ENCODE measurements at regions of chrX and their contacts with region 1.

Region 1: GRCh38 chrX:112731793-112732575 is 52.2 kb upstream of the LHFPL1 start:
- DNase-seq: peak in 2 of 9 experiments; percentile 0 to 2
- ATAC-seq: no peak
- H3K4me3 ChIP-seq: no peak overlapping the region
- H3K4me3 Mint-ChIP-seq: no peak overlapping the region
- H3K27ac ChIP-seq: no peak overlapping the region
- H3K27ac Mint-ChIP-seq: no peak overlapping the region
- H3K4me1 ChIP-seq: no peaks in the 10 kb centered on the region
- H3K4me1 Mint-ChIP-seq: peaks cover 5% of the 10 kb centered on the region
- H3K27me3 ChIP-seq: no peaks in the 10 kb centered on the region
- H3K27me3 Mint-ChIP-seq: no peaks in the 10 kb centered on the region
- CTCF ChIP-seq: peak; percentile 42

Region 2: GRCh38 chrX:111719426-111720210 is 1012.4 kb before region 1 on chrX:
- CTCF ChIA-PET with region 1: no interaction called
- POLR2A ChIA-PET with region 1: no interaction called
- intact Hi-C with region 1: loop called in 1 of 2 experiments (anchors 10 kb)
- DNase-seq: peak in 1 of 9 experiments; percentile 1
- ATAC-seq: no peak
- H3K4me3 ChIP-seq: no peak overlapping the region
- H3K4me3 Mint-ChIP-seq: no peak overlapping the region
- H3K27ac ChIP-seq: no peak overlapping the region
- H3K27ac Mint-ChIP-seq: no peak overlapping the region
- H3K4me1 ChIP-seq: no peaks in the 10 kb centered on the region
- H3K4me1 Mint-ChIP-seq: no peaks in the 10 kb centered on the region
- H3K27me3 ChIP-seq: no peaks in the 10 kb centered on the region
- H3K27me3 Mint-ChIP-seq: no peaks in the 10 kb centered on the region
- CTCF ChIP-seq: no peak

Region 3: DNA sequence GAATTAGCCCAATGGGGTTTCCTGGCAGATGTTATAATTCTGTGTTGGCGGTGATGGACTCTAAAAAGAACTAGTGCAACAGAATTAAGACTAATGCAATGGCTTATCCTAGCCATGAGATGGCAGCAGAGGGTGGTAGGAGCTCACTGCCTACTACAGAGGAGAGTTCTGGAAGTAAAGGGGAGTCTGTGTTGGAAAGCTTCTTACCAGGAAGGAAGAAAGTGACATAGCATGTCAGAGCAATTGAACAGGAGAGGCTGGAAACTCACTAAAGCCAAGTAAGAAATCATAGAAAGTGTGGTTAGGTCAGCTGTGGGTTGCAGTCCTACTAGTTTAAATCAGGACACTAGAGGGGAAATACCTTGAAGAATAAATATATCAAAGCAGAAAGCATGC is 862.3 kb before region 1 on chrX:
- CTCF ChIA-PET with region 1: interaction called, 6 read pairs
- POLR2A ChIA-PET with region 1: no interaction called
- intact Hi-C with region 1: loop called in 1 of 2 experiments (anchors 2 kb)
- DNase-seq: peak in 2 of 9 experiments; percentile 12 to 24
- ATAC-seq: no peak
- H3K4me3 ChIP-seq: no peak overlapping the region
- H3K4me3 Mint-ChIP-seq: no peak overlapping the region
- H3K27ac ChIP-seq: no peak overlapping the region
- H3K27ac Mint-ChIP-seq: no peak overlapping the region
- H3K4me1 ChIP-seq: no peaks in the 10 kb centered on the region
- H3K4me1 Mint-ChIP-seq: no peaks in the 10 kb centered on the region
- H3K27me3 ChIP-seq: no peaks in the 10 kb centered on the region
- H3K27me3 Mint-ChIP-seq: peaks cover 11% of the 10 kb centered on the region
- CTCF ChIP-seq: peak; percentile 42

Region 4: DNA sequence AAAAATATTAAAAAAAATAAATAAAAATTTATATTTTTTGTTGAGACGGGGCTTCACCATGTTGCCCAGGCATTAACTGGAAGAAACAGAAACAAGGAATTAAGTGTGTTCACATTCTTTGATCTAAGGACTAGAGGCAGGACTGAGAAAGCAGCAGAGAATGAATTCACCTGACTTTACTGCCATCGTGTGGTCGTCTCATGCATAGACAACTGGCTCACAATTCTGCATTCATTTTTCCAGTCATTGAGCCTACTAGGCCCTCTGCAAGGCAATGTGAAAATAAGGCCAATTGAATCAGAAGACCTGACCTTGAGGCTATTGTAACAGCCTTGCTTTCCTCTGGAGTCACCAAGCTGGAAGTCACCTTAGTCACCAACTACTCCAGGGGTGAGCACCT is 89.6 kb before region 1 on chrX:
- CTCF ChIA-PET with region 1: no interaction called
- POLR2A ChIA-PET with region 1: no interaction called
- intact Hi-C with region 1: loop called in 1 of 2 experiments (anchors 10 kb)
- DNase-seq: peak in 7 of 9 experiments; percentile 0 to 50 (median 17)
- ATAC-seq: peak; percentile 44
- H3K4me3 ChIP-seq: no peak overlapping the region
- H3K4me3 Mint-ChIP-seq: no peak overlapping the region
- H3K27ac ChIP-seq: no peak overlapping the region
- H3K27ac Mint-ChIP-seq: no peak overlapping the region
- H3K4me1 ChIP-seq: no peaks in the 10 kb centered on the region
- H3K4me1 Mint-ChIP-seq: peaks cover 3% of the 10 kb centered on the region
- H3K27me3 ChIP-seq: no peaks in the 10 kb centered on the region
- H3K27me3 Mint-ChIP-seq: no peaks in the 10 kb centered on the region
- CTCF ChIP-seq: peak; percentile 56

Measured in CD8-positive, alpha-beta T cell (primary cell).